ENCODE measurements at regions of chr5 and their contacts with region 1.

Region 1: GRCh38 chr5:96752341-96753016 is 55.3 kb downstream of the ERAP1 start:
- DNase-seq: peak; percentile 67
- ATAC-seq: no peak
- H3K4me3 Mint-ChIP-seq: no peak overlapping the region
- H3K27ac Mint-ChIP-seq: no peak overlapping the region
- H3K4me1 Mint-ChIP-seq: no peaks in the 10 kb centered on the region
- H3K27me3 Mint-ChIP-seq: no peaks in the 10 kb centered on the region

Region 2: GRCh38 chr5:96702503-96703383 is 49.7 kb before region 1 on chr5:
- CTCF ChIA-PET with region 1: no interaction called
- POLR2A ChIA-PET with region 1: no interaction called
- DNase-seq: peak; percentile 76
- ATAC-seq: peak; percentile 86
- H3K4me3 Mint-ChIP-seq: peak overlapping the region; percentile 77
- H3K27ac Mint-ChIP-seq: peak overlapping the region; percentile 88
- H3K4me1 Mint-ChIP-seq: peaks cover 27% of the 10 kb centered on the region
- H3K27me3 Mint-ChIP-seq: no peaks in the 10 kb centered on the region

Region 3: GRCh38 chr5:96763026-96763425 is 10.5 kb after region 1 on chr5:
- CTCF ChIA-PET with region 1: interaction called, 27 read pairs
- POLR2A ChIA-PET with region 1: no interaction called
- DNase-seq: no peak
- ATAC-seq: no peak
- H3K4me3 Mint-ChIP-seq: no peak overlapping the region
- H3K27ac Mint-ChIP-seq: no peak overlapping the region
- H3K4me1 Mint-ChIP-seq: no peaks in the 10 kb centered on the region
- H3K27me3 Mint-ChIP-seq: no peaks in the 10 kb centered on the region

Region 4: GRCh38 chr5:96771395-96771794 is 18.9 kb after region 1 on chr5:
- CTCF ChIA-PET with region 1: interaction called, 14 read pairs
- POLR2A ChIA-PET with region 1: interaction called, 4 read pairs
- DNase-seq: no peak
- ATAC-seq: peak; percentile 57
- H3K4me3 Mint-ChIP-seq: no peak overlapping the region
- H3K27ac Mint-ChIP-seq: peak overlapping the region; percentile 61
- H3K4me1 Mint-ChIP-seq: peaks cover 18% of the 10 kb centered on the region
- H3K27me3 Mint-ChIP-seq: no peaks in the 10 kb centered on the region

Region 5: GRCh38 chr5:96807075-96807654 is 54.7 kb after region 1 on chr5:
- CTCF ChIA-PET with region 1: interaction called, 11 read pairs
- POLR2A ChIA-PET with region 1: interaction called, 3 read pairs
- DNase-seq: peak; percentile 54
- ATAC-seq: peak; percentile 28
- H3K4me3 Mint-ChIP-seq: peak overlapping the region; percentile 90
- H3K27ac Mint-ChIP-seq: peak overlapping the region; percentile 99
- H3K4me1 Mint-ChIP-seq: peaks cover 73% of the 10 kb centered on the region
- H3K27me3 Mint-ChIP-seq: no peaks in the 10 kb centered on the region

Region 6: DNA sequence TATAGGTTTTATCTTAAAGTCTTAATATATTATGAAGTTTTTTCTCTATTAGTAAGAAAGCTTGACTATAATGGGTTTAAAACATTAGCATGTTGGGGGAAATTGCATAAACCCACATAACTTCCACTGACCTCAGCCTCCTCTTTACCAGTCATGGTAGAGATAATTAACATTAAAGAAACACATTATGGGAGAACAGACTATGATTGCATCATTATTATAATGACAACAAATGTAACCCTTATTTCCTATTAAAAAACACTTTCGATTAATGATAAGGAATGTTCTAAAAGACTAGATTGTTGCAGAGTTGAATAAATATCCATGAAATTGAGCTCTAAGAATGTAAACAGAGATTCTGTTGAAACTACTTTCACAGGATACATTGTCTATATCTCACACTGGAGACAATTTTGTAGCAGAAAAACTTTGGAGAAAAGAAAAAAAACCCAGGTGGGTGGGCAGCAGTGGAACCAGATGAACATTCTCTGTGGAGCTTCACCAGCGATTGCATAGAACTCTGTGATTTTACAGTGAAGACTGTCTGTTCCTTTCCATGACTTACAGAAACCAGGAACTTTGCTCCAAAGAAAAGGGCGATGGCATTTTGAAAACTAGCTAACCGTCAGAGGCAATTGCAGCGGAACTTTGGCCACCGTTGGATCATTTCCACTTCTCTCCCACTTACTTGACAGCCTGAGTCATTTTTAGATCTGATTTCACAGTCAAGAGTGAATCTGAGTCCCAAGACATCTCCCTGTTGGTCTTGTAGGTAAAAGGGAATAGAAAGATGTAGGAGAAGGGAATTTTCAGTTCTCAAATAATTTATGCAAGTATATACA is 102.8 kb after region 1 on chr5:
- CTCF ChIA-PET with region 1: no interaction called
- POLR2A ChIA-PET with region 1: no interaction called
- DNase-seq: no peak
- ATAC-seq: no peak
- H3K4me3 Mint-ChIP-seq: no peak overlapping the region
- H3K27ac Mint-ChIP-seq: no peak overlapping the region
- H3K4me1 Mint-ChIP-seq: no peaks in the 10 kb centered on the region
- H3K27me3 Mint-ChIP-seq: peaks cover 7% of the 10 kb centered on the region

Measured in activated CD8-positive, alpha-beta T cell treated with anti-CD3 and anti-CD28 coated beads, Interleukin-2, amount 10 ng/mL, durations not matched to agents 7 days and 5 days (primary cell).